Common myeloid progenitor, CD34-positive (primary cell): ENCODE measurements at regions of chr5 and their contacts with region 1.

Region 1: DNA sequence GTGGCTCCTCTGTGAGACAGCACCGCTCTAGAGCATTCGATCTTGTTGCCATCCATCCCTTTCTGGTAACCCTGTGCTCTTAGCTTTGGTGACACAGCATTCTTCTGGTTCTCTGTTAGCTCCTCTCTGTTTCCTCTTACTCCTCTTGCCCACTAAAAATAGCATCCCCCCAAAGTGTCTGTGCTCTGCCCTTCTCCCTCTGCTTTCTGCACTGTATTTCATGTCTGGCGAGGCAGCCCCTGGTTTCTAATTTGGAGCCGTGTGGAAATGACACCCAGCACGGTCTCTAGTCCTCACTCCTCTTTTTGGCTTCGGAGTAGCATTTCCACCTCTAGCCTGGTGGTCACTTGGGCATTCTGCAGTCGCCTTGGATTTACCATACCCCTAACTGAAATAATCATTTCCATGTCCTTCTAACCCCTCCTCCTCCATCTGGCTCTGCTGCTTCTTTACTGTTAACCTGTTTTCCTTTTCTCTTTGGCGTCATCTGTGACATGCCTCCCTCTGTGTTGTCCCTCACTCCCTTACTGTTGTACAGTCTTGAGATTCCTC is 23.8 kb downstream of the NPR3 start:
- DNase-seq: peak in 2 of 3 donors; percentile 64 to 77
- H3K4me3 ChIP-seq: peak overlapping the region in 5 of 7 experiments; percentile 20 to 62 (median 58)
- H3K27ac ChIP-seq: peak overlapping the region; percentile 30 to 65
- H3K4me1 ChIP-seq: peaks cover 34 to 70% (median 52%) of the 10 kb centered on the region in 4 experiments
- H3K27me3 ChIP-seq: no peaks in the 10 kb centered on the region

Region 2: DNA sequence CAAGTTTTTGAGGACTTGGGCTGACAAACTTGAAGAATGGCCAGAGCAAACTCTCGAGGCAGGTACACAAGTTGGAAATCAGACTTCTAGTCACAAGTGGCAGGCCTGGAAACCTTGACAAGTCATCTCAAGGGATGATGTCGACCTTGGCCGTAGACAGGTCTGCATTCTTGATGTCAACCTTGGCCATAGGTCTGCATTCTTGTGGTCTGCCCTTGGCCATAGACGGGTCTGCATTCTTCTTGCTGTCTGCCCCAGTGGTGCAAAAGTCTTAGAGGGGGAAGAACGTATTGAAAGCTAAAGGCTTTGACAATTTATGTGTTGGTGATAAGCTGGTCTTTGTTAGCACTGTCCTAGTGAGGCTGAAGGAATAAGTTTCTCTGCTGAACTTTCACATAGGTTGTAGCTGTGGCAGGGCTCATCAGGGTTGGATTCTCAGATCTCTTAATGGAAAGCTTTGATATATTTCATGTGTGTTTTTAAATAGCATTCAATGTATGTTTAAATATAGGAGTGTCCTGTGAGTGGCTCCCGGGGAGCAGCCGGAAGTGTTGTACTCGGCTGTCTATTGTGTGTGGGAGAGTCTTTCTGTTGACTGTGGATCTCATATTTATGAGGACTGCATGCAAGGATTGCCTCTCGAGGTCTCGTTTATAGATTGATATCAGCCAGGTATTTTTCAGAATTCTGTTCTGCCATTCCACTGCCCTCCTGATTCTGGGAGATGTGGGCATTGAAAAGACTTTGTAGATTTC is 122.6 kb before region 1 on chr5:
- CTCF ChIA-PET with region 1: no interaction called
- POLR2A ChIA-PET with region 1: no interaction called
- DNase-seq: no peak
- H3K4me3 ChIP-seq: no peak overlapping the region
- H3K27ac ChIP-seq: no peak overlapping the region
- H3K4me1 ChIP-seq: peaks cover 0 to 3% (median 0%) of the 10 kb centered on the region in 4 experiments
- H3K27me3 ChIP-seq: no peaks in the 10 kb centered on the region

Region 3: DNA sequence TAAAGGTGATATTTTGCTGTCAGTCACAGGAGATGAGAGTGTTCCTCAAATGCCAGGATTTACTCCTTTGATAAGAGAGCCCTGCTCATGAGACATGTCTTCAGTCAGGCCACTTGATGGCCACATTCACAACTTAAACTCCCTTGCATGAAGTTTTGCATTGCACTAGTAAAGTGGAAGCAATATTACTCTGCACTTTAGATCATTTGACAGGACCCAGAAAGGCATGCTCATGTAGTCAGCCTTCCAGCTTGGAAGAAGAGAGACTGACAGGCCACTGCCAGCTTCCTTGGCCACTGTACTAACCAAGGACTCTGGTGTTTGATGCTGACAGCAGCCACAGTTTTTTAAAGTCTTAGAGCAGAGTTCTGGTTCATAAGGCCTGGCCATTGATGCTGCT is 18.9 kb after region 1 on chr5:
- CTCF ChIA-PET with region 1: interaction called, 17 read pairs
- POLR2A ChIA-PET with region 1: no interaction called
- DNase-seq: peak in 2 of 3 donors; percentile 33 to 48
- H3K4me3 ChIP-seq: no peak overlapping the region
- H3K27ac ChIP-seq: no peak overlapping the region
- H3K4me1 ChIP-seq: peaks cover 7 to 23% (median 9%) of the 10 kb centered on the region in 4 experiments
- H3K27me3 ChIP-seq: no peaks in the 10 kb centered on the region